ENCODE measurements at regions of chr1 and their contacts with region 1.

Region 1: GRCh38 chr1:242454262-242455045 is 70.0 kb downstream of the PLD5 start:
- DNase-seq: peak; percentile 48
- H3K4me3 ChIP-seq: no peak overlapping the region
- H3K27ac ChIP-seq: no peak overlapping the region
- H3K4me1 ChIP-seq: no peaks in the 10 kb centered on the region
- H3K27me3 ChIP-seq: no peaks in the 10 kb centered on the region
- CTCF ChIP-seq: peak; percentile 63 to 79

Region 2: DNA sequence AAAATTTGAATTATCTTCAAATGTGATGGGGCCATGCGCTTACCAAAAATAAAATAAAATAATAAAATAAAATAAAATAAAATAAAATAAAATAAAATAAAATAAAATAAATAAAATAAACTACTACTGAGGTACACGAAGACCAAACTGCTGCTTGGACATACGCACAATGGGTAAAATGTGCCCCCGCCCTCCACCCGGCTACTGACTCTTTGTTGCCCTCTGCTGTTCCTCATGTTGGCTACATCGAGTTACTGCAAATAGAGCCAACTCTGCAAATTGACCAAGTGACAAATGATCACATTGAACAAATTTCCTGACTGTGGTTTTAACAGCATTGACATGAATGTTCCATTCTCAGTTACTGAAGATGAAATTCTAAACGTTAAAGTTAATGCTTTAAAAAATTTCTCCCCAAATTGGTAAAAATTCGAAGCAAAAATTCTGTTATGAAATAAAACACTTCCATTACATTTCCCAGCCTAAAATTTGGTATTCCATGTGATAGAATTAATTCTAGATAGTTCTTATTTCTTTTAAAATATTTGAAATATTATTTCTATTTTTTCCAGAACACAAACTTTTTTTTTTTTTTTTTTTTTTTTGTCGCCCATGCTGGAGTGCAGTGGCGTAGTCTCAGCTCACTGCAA is 436.7 kb before region 1 on chr1:
- CTCF ChIA-PET with region 1: no interaction called
- dilution Hi-C with region 1: no loop called
- in situ Hi-C with region 1: no loop called
- intact Hi-C with region 1: loop called (anchors 1 kb)
- DNase-seq: peak; percentile 33
- H3K4me3 ChIP-seq: no peak overlapping the region
- H3K27ac ChIP-seq: no peak overlapping the region
- H3K4me1 ChIP-seq: peaks cover 4% of the 10 kb centered on the region
- H3K27me3 ChIP-seq: peaks cover 2% of the 10 kb centered on the region
- CTCF ChIP-seq: peak; percentile 66 to 79

Region 3: DNA sequence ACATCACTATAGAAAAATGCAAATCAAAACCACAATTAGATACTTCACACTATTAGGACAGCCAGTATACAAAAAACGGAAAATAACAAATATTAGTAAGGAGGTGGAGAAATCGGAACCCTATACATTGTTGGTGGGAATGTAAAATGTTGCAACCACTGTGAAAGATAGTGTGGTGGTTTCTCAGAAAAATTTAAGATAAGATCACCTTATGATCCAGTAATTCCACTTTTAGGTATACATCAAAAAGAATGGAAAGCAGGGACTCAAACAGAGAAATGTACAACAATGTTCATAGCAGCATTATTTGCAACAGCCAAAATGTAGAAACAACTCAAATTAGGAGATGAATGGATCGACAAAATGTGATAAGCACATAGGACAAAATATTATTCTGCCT is 76.7 kb before region 1 on chr1:
- CTCF ChIA-PET with region 1: no interaction called
- dilution Hi-C with region 1: no loop called
- in situ Hi-C with region 1: no loop called
- intact Hi-C with region 1: no loop called
- DNase-seq: no peak
- H3K4me3 ChIP-seq: no peak overlapping the region
- H3K27ac ChIP-seq: no peak overlapping the region
- H3K4me1 ChIP-seq: no peaks in the 10 kb centered on the region
- H3K27me3 ChIP-seq: no peaks in the 10 kb centered on the region
- CTCF ChIP-seq: no peak

Region 4: GRCh38 chr1:242641461-242641860 is 187.0 kb after region 1 on chr1:
- CTCF ChIA-PET with region 1: no interaction called
- dilution Hi-C with region 1: no loop called
- in situ Hi-C with region 1: no loop called
- intact Hi-C with region 1: loop called (anchors 2 kb)
- DNase-seq: no peak
- H3K4me3 ChIP-seq: no peak overlapping the region
- H3K27ac ChIP-seq: no peak overlapping the region
- H3K4me1 ChIP-seq: no peaks in the 10 kb centered on the region
- H3K27me3 ChIP-seq: no peaks in the 10 kb centered on the region
- CTCF ChIP-seq: no peak